WTC11 (cell line): ENCODE measurements at regions of chr10 and their contacts with region 1.

Region 1: GRCh38 chr10:27252267-27253000 is 11.8 kb upstream of the ACBD5 start:
- DNase-seq: peak; percentile 86
- ATAC-seq: peak; percentile 96
- H3K4me3 Mint-ChIP-seq: peak overlapping the region; percentile 59
- H3K27ac Mint-ChIP-seq: no peak overlapping the region
- H3K4me1 Mint-ChIP-seq: peaks cover 4% of the 10 kb centered on the region
- H3K27me3 Mint-ChIP-seq: peaks cover 28% of the 10 kb centered on the region
- CTCF ChIP-seq: peak; percentile 64; the same call in 1 of the 2 replicates

Region 2: GRCh38 chr10:27241652-27242472 is 10.6 kb before region 1 on chr10:
- CTCF ChIA-PET with region 1: interaction called, 14 read pairs
- POLR2A ChIA-PET with region 1: interaction called, 3 read pairs
- DNase-seq: peak; percentile 91
- ATAC-seq: peak; percentile 72
- H3K4me3 Mint-ChIP-seq: peak overlapping the region; percentile 93
- H3K27ac Mint-ChIP-seq: peak overlapping the region; percentile 99
- H3K4me1 Mint-ChIP-seq: peaks cover 26% of the 10 kb centered on the region
- H3K27me3 Mint-ChIP-seq: 0 out of 2 replicates have a peak, but pooled peaks cover 3% of the 10 kb centered on the region
- CTCF ChIP-seq: no peak

Region 3: DNA sequence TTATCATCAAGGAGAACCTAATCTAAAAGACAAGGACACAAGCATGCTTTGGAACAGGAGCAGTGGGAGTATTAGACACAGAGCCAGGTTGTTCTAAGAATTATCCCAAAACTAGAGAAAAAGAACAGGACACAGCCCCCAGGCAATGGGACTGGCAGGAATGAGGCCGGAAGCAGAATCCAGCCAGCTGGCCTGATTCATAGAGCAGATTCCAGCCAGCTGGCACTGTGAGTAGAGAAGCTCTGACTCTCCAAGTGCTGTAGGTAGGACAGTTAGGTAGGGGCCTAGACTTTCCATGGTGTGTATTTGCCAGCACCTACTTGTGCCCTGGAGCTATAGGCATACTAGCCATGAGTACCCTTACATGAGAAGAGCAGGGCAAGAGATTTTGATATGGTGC is 238.4 kb after region 1 on chr10:
- CTCF ChIA-PET with region 1: no interaction called
- POLR2A ChIA-PET with region 1: no interaction called
- DNase-seq: no peak
- ATAC-seq: no peak
- H3K4me3 Mint-ChIP-seq: no peak overlapping the region
- H3K27ac Mint-ChIP-seq: no peak overlapping the region
- H3K4me1 Mint-ChIP-seq: no peaks in the 10 kb centered on the region
- H3K27me3 Mint-ChIP-seq: peaks cover 4% of the 10 kb centered on the region; the same call in 1 of the 2 replicates
- CTCF ChIP-seq: no peak